Activated naive CD4-positive, alpha-beta T cell treated with anti-CD3 and anti-CD28 coated beads for 36 hours (primary cell): ENCODE measurements at regions of chr4 and their contacts with region 1.

Region 1: GRCh38 chr4:146342600-146343192 is 128.4 kb downstream of the REELD1 start:
- DNase-seq: peak; percentile 59
- H3K4me3 Mint-ChIP-seq: no peak overlapping the region
- H3K27ac Mint-ChIP-seq: no peak overlapping the region
- H3K4me1 Mint-ChIP-seq: peaks cover 7% of the 10 kb centered on the region
- H3K27me3 Mint-ChIP-seq: no peaks in the 10 kb centered on the region

Region 2: GRCh38 chr4:146179784-146180405 is 162.8 kb before region 1 on chr4:
- CTCF ChIA-PET with region 1: no interaction called
- intact Hi-C with region 1: no loop called
- DNase-seq: no peak
- H3K4me3 Mint-ChIP-seq: no peak overlapping the region
- H3K27ac Mint-ChIP-seq: no peak overlapping the region
- H3K4me1 Mint-ChIP-seq: peaks cover 57% of the 10 kb centered on the region
- H3K27me3 Mint-ChIP-seq: no peaks in the 10 kb centered on the region

Region 3: GRCh38 chr4:146494143-146494542 is 151.4 kb after region 1 on chr4:
- CTCF ChIA-PET with region 1: no interaction called
- intact Hi-C with region 1: no loop called
- DNase-seq: no peak
- H3K4me3 Mint-ChIP-seq: no peak overlapping the region
- H3K27ac Mint-ChIP-seq: no peak overlapping the region
- H3K4me1 Mint-ChIP-seq: peaks cover 24% of the 10 kb centered on the region
- H3K27me3 Mint-ChIP-seq: no peaks in the 10 kb centered on the region

Region 4: DNA sequence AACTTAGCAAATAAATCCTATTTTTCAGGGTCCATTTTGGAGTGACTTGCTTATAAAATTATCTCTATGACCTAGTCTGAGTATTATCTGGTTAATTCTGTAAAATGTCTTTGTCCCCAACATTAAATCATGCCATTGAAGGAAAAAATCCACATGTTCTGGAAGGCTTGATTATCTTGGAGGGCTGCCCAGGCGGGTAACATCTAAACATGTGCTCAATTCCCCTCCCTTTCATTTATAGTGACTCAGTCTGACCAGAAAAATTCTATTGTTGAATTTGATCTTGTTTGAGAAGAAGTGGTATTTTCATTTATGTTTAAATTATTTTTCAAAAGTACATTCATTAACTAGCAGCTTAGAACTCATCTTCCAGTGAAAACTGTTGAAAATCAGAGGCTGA is 234.4 kb after region 1 on chr4:
- CTCF ChIA-PET with region 1: interaction called, 3 read pairs
- intact Hi-C with region 1: loop called (anchors 10 kb)
- DNase-seq: no peak
- H3K4me3 Mint-ChIP-seq: no peak overlapping the region
- H3K27ac Mint-ChIP-seq: no peak overlapping the region
- H3K4me1 Mint-ChIP-seq: no peaks in the 10 kb centered on the region
- H3K27me3 Mint-ChIP-seq: peaks cover 6% of the 10 kb centered on the region

Region 5: DNA sequence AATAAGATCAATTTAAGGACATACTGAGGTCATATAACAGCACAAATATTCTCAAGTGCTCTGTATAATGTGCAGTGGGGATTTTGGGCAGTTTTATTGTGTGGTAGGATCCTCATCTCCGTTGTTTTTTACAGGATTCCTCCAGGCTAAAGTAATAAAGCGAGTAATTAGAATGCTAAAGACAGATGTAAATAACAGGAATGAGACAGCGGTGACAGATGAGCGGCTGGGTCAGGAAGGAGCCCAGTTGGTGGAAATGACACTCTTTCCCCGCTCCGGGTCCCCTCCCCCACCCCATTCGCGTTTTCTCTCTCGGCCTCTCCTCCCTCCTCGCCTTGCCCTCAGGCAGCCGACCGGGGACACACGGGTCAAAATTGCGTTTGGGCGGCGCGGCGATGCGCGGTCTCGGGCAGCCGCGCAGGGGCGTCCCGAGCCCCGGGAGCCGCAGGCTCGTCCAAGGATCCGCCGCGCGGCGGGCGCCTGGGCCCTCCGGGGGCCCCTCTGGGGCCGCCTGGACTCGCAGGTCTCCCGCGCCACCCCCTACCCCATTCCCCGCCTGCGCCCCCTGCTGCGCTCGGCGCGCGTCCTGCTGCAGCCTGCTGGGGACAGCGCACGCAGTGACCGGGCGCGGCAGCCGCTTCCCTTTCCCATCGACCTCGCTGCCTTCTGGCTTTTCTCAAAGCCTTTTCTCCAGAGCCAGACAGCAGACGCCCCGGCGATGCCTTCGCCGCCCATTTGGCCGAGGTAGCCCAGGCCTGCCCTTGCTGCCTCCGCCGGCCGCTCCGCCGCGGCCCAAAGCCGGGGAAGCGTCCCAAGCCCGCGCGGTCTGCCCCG is 312.2 kb after region 1 on chr4:
- CTCF ChIA-PET with region 1: no interaction called
- intact Hi-C with region 1: loop called (anchors 2 kb)
- DNase-seq: peak; percentile 29
- H3K4me3 Mint-ChIP-seq: peak overlapping the region; percentile 54
- H3K27ac Mint-ChIP-seq: no peak overlapping the region
- H3K4me1 Mint-ChIP-seq: peaks cover 10% of the 10 kb centered on the region
- H3K27me3 Mint-ChIP-seq: peaks cover 67% of the 10 kb centered on the region

Region 6: GRCh38 chr4:146790515-146790914 is 447.8 kb after region 1 on chr4:
- CTCF ChIA-PET with region 1: no interaction called
- intact Hi-C with region 1: loop called (anchors 10 kb)
- DNase-seq: no peak
- H3K4me3 Mint-ChIP-seq: no peak overlapping the region
- H3K27ac Mint-ChIP-seq: no peak overlapping the region
- H3K4me1 Mint-ChIP-seq: no peaks in the 10 kb centered on the region
- H3K27me3 Mint-ChIP-seq: peaks cover 7% of the 10 kb centered on the region

Region 7: DNA sequence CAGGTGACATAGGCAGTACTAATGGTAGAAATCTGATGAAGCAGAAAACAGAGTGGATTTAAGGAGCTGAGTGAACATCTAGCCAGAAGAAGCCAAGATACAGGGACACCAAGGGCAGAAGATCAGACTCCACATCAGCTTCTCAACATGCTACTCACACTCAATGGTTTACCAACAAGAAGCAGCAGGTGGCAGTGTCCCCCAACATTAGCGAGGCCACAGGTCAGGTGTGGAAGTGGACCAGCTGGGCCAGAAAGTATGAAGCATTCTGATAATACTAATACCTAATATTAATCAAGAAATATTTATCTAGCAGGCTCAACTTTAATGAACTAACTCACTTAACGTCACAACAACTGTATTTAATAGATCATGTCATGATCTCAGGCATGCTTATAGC is 676.4 kb after region 1 on chr4:
- CTCF ChIA-PET with region 1: no interaction called
- intact Hi-C with region 1: loop called (anchors 5 kb)
- DNase-seq: peak; percentile 77
- H3K4me3 Mint-ChIP-seq: no peak overlapping the region
- H3K27ac Mint-ChIP-seq: no peak overlapping the region
- H3K4me1 Mint-ChIP-seq: no peaks in the 10 kb centered on the region
- H3K27me3 Mint-ChIP-seq: peaks cover 11% of the 10 kb centered on the region